GM18951 (cell line): ENCODE measurements at regions of chr6 and their contacts with region 1.

Region 1: DNA sequence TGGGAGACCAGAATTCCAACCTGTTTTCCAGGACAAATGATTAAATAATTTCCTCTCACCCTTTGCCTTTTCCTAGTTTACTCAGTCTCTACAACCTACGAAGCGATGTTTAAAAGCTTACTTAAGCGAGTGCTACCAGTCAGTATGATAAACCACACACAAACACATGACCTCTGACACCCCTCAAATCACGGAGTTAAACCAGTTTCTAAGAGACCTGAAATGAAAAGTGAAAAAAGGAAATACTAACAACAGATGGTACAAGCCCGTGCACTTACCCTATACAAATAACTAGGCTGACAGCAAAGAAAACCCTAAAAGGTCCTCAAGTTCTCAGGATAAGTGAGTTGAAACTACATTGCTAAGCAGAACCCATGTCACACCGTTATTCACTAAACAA is 7.7 kb downstream of the TNFRSF21 start:
- POLR2A ChIP-seq: no peak

Region 2: GRCh38 chr6:45514454-45515230 is 1787.4 kb before region 1 on chr6:
- in situ Hi-C with region 1: no loop called
- POLR2A ChIP-seq: no peak

Region 3: DNA sequence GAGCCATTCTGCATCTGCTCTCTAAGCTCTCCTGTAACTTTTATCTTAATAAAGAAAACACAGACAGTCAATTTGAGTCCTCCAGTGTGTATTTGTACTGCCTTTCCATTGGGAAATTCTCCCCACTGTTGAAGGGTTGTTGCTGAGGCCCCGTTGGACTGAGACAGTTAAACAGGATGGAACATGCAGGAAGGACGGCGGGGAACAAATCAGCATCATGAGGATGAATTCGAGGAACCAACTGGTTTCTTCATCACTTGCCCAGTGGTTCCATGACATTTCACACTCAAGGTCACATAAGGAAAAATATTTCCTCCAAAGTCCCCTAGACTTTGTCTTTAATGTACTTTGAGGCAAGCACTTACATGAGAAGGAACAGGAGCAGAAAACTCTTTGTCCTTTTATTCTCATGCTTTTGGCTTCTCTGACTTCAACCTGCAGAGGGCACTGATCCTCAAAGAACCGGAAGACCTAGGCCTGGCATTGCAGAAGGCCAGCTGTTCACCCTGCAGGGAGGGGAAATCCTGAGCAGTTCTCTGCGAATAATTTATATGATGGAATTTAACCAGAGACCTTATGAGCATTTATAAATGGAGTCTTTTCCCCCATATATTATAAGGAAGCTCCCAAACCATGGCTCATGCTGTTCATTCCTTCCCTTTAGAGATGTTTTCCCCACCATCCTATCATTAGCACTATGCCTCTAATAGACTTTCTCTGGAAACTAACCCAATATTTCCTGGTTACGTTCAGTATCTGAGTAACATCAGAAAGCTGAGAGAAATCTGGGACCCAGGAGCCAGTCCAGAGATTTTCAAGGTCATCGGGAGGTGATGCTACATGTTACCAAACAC is 204.7 kb before region 1 on chr6:
- in situ Hi-C with region 1: loop called (anchors 5 kb)
- POLR2A ChIP-seq: no peak